ENCODE measurements at regions of chr9 and their contacts with region 1.

Region 1: DNA sequence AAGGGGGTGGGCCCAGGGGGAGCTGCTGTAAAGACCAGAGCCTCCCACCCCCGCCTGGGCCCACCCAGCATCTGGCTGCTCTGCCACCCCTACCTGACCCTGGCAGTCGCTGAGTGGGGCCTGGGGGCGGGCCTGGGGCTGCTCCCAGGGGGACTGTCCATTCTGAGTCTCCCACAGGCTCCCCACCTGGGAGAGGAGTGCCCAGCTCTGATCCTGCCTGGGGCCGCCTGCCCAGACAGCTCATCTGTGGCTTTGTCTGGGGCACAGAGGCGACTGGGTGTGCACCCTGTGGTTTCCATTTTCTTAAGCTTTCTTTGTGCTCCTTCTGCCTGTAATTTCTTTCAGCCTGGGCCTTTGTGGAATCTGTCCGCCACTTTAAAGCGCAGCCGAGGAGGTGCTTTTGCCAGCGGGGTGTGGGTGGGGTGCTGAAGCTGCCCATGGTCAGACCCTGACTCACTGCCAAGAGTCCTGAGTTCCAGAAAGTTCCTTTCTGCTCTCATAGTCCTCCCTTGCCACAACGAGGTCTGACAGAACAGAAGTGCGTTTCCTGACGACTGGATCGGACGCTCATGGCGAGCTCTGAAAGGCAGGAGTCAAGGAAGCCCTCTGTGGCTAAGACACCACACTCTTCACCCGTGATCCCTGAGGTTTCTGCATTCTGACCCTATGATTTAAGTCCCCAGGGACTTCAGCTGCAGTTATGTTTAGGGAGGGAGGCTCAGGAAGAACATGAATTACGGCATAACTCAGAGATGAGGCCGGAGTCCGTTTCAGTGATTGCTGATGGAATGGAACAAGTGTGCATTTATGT is 225.0 kb downstream of the FANCC start:
- DNase-seq: no peak
- H3K4me3 ChIP-seq: no peak overlapping the region
- H3K27ac ChIP-seq: no peak overlapping the region
- H3K4me1 ChIP-seq: peaks cover 0 to 12% (median 7%) of the 10 kb centered on the region in 4 experiments
- H3K27me3 ChIP-seq: no peaks in the 10 kb centered on the region
- CTCF ChIP-seq: no peak
- EP300 ChIP-seq: no peak
- POLR2A ChIP-seq: no peak
- RAD21 ChIP-seq: no peak

Region 2: GRCh38 chr9:95078958-95079357 is 13.5 kb before region 1 on chr9:
- CTCF ChIA-PET with region 1: interaction called, 23 read pairs
- POLR2A ChIA-PET with region 1: interaction called, 3 read pairs
- DNase-seq: no peak
- H3K4me3 ChIP-seq: no peak overlapping the region
- H3K27ac ChIP-seq: no peak overlapping the region
- H3K4me1 ChIP-seq: peaks cover 0 to 9% (median 2%) of the 10 kb centered on the region in 4 experiments; a peak in 3 of 7 replicates
- H3K27me3 ChIP-seq: no peaks in the 10 kb centered on the region
- CTCF ChIP-seq: peak in 1 of 3 experiments; percentile 16; a peak in 1 of 4 replicates
- EP300 ChIP-seq: no peak
- POLR2A ChIP-seq: no peak
- RAD21 ChIP-seq: peak; percentile 28 to 33; a peak in 2 of 4 replicates

Region 3: DNA sequence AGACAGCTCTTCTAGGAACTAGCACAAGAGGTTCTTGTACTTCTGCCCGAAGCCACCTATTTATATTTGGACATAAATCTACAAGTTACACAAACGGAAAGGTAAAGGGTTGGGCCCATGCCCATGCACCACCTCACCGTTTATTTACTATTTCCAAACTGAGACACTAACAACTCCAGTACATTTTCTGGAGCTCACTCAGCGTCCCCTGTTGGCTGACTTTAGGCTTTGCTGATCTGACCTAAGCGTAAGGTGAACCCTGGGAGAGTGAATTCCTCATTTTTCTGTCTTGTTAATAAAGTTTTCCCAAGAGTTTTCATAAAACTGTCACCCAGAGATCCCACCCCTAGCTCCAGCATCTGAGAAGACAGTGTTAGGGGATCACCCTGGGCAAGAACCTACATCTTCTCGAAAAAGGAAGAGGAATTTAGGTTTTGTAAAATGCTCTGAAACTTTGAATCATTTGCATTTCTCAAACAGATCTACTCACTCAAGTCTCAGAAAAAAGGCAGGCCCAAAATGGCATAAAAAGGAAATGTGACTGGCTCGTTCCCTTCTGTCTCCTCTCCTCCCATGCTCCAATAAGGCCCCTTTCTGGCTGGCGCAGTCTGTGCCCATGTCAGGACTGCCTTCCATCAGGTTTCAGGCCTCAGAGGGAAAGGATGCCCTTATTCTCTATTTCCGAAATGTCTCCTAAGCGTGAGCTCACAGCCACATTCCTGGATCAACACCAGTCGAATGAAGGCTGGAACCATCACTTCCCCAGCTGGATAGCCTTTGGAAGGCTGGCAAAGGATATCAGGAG is 23.7 kb after region 1 on chr9:
- CTCF ChIA-PET with region 1: interaction called, 209 read pairs
- POLR2A ChIA-PET with region 1: no interaction called
- DNase-seq: no peak
- H3K4me3 ChIP-seq: no peak overlapping the region
- H3K27ac ChIP-seq: no peak overlapping the region
- H3K4me1 ChIP-seq: no peaks in the 10 kb centered on the region
- H3K27me3 ChIP-seq: no peaks in the 10 kb centered on the region
- CTCF ChIP-seq: peak; percentile 30 to 77 (median 67)
- EP300 ChIP-seq: no peak
- POLR2A ChIP-seq: no peak
- RAD21 ChIP-seq: peak; percentile 75 to 78

Region 4: DNA sequence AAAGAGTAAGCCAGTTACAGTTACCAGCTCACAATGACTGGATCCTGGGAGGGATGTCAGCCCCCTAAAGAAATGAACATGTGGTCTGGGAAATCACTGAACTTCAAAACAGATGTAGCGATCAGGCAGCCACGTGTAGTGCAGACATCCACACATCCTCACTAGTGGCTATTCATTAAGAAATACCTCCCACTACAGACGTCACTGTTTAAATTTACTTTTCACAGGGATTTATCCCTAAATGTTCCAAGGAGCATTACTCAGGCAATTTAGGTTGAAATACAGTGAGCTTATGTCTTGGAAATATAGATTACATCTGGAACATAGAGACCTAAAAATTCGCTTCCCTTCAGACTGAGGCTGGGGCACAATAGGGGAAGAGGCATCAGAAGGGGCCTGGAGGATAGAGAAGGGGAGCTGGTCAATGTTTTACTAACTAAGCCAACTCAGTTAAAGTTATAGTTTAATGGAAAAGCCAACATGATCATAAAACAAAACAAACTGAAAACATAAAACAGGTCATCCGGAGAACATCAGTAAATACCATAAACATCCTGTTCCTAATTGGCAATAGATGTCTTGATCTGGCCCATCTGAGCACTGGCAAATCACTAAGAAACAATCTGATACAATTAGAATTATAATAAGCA is 132.7 kb after region 1 on chr9:
- CTCF ChIA-PET with region 1: no interaction called
- POLR2A ChIA-PET with region 1: no interaction called
- DNase-seq: no peak
- H3K4me3 ChIP-seq: no peak overlapping the region
- H3K27ac ChIP-seq: no peak overlapping the region
- H3K4me1 ChIP-seq: peaks cover 0 to 2% (median under 1%) of the 10 kb centered on the region in 4 experiments; a peak in 3 of 7 replicates
- H3K27me3 ChIP-seq: no peaks in the 10 kb centered on the region
- CTCF ChIP-seq: no peak
- EP300 ChIP-seq: no peak
- POLR2A ChIP-seq: no peak
- RAD21 ChIP-seq: no peak